SK-N-SH (cell line): ENCODE measurements at regions of chr16 and their contacts with region 1.

Region 1: DNA sequence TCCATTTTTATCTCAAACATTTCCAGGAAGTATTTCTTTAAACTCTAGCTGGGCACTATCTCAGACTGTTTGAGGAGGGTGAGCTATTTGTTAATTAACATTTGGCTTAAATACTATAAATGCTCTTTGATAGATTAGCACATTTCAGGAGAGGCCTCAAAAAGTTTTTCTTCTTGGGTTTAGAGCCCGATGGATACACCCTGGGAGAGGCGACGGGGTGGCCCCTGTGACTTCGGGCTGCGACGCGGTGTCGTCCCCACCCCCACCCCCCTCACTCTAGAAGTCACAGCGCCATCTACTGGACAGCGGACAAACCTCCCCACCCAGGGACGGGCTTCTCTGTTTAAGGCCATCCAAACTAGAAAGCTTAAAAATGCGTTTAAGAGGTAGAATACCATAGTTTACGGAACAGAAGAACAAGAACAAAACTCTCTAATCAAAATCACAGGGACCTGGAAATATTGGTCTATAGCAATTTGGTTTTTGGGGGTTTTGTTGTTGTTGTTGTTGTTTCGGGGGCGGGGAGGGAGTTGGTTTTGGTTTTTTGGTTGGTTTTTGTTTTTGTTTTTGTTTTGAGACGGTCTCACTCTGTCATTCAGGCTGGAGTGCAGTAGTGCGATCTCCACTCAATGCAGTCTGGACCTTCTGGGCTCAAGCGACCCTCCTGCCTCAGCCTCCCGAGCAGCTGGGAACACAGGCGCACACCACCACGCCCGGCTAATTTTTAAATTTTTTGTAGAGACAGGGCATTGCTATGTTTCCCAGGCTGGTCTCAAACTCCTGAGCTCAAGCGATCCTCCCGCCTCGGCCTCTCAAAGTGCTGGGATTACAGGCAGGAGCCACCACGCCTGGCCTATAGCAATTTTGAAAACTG is 254.4 kb downstream of the C16orf95 start:
- DNase-seq: peak; percentile 91
- H3K4me3 ChIP-seq: peak overlapping the region in 1 of 2 experiments; percentile 30; a peak in 1 of 4 replicates
- H3K27ac ChIP-seq: no peak overlapping the region
- H3K4me1 ChIP-seq: no peaks in the 10 kb centered on the region
- H3K27me3 ChIP-seq: peaks cover 67% of the 10 kb centered on the region
- CTCF ChIP-seq: peak; percentile 96
- EP300 ChIP-seq: no peak
- RAD21 ChIP-seq: peak; percentile 69

Region 2: DNA sequence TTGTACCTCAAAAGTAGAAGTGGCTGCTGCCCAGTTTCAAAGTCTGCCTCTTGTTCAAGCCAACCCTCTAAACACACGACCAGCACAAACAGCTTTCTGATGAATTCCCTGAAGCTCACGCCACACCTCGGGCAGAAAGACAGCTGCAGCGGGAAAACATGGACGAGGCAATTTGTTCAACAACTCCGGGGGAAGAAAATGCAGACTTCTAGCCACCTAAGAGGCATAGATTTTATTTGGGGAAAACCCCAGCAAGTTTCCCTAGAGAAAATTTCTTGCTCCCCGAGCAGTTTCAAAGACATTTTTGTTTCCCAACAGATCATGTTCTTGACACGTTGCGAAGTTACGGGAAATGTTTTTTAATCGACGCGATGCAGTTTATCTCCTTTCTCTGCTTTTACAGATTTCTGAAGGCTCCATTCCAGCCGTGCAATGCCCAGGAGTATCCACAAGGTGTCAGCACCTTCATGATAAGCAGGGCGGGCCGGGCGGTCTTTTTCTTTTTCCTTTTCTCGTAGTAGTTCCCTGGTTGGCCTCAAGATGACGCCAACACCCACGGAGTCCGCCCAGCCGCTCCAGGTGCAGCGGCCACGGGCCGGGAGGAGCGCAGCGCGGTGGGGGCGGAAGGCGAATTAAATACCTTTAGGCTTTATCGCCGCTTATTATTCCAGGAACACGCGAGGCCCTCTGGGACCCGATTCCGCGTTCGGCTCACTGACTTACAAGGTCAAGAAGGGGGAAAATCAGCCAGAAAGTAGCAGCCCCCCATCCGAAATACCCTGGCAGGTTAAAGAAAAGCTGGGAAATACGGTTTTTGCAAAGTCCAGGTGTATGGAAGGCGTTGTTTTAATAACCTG is 499.1 kb before region 1 on chr16:
- CTCF ChIA-PET with region 1: interaction called, 56 read pairs
- POLR2A ChIA-PET with region 1: no interaction called
- DNase-seq: peak; percentile 92
- H3K4me3 ChIP-seq: peak overlapping the region; percentile 25 to 58; a peak in 3 of 4 replicates
- H3K27ac ChIP-seq: no peak overlapping the region
- H3K4me1 ChIP-seq: no peaks in the 10 kb centered on the region; a peak in 1 of 4 replicates
- H3K27me3 ChIP-seq: peaks cover 23% of the 10 kb centered on the region; the same call in 1 of the 2 replicates
- CTCF ChIP-seq: peak; percentile 100
- EP300 ChIP-seq: no peak
- RAD21 ChIP-seq: peak; percentile 99

Region 3: GRCh38 chr16:86914876-86915717 is 147.7 kb before region 1 on chr16:
- CTCF ChIA-PET with region 1: no interaction called
- POLR2A ChIA-PET with region 1: no interaction called
- DNase-seq: no peak
- H3K4me3 ChIP-seq: no peak overlapping the region
- H3K27ac ChIP-seq: no peak overlapping the region
- H3K4me1 ChIP-seq: no peaks in the 10 kb centered on the region
- H3K27me3 ChIP-seq: no peaks in the 10 kb centered on the region
- CTCF ChIP-seq: no peak
- EP300 ChIP-seq: no peak
- RAD21 ChIP-seq: no peak

Region 4: GRCh38 chr16:87047221-87048037 is 15.4 kb before region 1 on chr16:
- CTCF ChIA-PET with region 1: interaction called, 12 read pairs
- POLR2A ChIA-PET with region 1: no interaction called
- DNase-seq: no peak
- H3K4me3 ChIP-seq: no peak overlapping the region
- H3K27ac ChIP-seq: no peak overlapping the region
- H3K4me1 ChIP-seq: no peaks in the 10 kb centered on the region
- H3K27me3 ChIP-seq: peaks cover 98% of the 10 kb centered on the region
- CTCF ChIP-seq: no peak
- EP300 ChIP-seq: no peak
- RAD21 ChIP-seq: no peak

Region 5: DNA sequence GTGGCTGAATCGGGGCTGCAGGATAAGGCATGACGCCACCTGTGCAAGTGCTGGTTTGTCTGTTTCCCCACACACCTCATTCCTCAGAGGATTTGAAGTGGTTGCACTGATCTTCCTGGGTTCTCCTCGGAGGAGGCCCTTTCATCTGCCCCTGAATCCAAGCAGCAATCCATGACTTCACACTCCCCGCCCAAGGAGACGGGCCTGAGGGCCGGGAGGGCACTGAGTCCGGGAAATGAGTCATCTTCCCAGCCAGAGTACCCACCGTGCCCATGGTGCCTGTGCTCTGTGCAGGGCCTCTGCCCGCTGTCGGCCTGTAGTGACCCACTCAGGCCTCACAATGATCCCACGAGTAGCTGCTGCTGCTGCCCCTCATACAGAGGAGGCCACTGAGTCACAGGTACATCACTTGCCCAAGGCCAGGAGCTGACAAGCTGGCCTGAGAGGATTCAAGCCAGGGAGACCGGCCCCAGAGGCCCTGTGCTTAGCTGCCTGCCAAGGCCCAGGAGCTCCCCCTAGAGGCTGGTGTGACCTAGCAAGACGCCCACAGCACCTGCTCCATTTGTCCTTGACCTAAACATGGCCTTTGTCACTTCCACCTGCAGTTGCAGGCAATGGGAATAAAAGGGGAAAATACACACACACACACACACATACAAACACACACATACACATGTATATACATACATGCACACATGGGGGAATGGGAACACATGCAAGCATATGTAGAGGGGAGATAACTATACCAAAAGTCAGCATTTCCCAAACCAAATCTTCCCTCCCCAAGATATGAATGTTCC is 14.3 kb after region 1 on chr16:
- CTCF ChIA-PET with region 1: interaction called, 15 read pairs
- POLR2A ChIA-PET with region 1: no interaction called
- DNase-seq: peak; percentile 38
- H3K4me3 ChIP-seq: no peak overlapping the region; a peak in 1 of 4 replicates
- H3K27ac ChIP-seq: no peak overlapping the region
- H3K4me1 ChIP-seq: no peaks in the 10 kb centered on the region
- H3K27me3 ChIP-seq: peaks cover 35% of the 10 kb centered on the region
- CTCF ChIP-seq: peak; percentile 55
- EP300 ChIP-seq: no peak
- RAD21 ChIP-seq: 0 out of 2 replicates have a peak, but pooled peaks have one; percentile 19